Mammary epithelial cell (primary cell): ENCODE measurements at regions of chr5 and their contacts with region 1.

Region 1: DNA sequence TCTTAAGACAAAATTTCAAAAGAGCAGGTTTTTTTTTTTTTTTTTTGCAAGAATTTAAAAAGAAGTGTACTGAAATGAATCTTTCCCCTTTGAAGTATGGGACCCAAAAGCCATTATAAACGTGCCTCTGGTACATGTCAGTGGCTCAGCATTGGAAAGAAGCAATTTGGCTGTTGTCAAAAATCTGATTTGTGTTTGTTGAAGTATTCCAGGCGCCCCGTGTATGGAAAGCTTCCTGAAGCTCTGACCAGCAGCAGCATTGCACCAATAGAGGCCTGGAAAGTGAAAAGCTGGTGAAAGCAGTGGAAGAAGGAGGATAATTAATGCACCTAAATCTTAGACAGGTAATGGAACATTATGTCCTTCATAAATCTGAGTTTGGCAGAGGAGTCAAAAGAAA is 215.0 kb downstream of the PARP8 start:
- DNase-seq: no peak
- H3K4me3 ChIP-seq: no peak overlapping the region
- H3K27ac ChIP-seq: no peak overlapping the region
- H3K4me1 ChIP-seq: no peaks in the 10 kb centered on the region
- H3K27me3 ChIP-seq: peaks cover 5% of the 10 kb centered on the region
- CTCF ChIP-seq: no peak

Region 2: DNA sequence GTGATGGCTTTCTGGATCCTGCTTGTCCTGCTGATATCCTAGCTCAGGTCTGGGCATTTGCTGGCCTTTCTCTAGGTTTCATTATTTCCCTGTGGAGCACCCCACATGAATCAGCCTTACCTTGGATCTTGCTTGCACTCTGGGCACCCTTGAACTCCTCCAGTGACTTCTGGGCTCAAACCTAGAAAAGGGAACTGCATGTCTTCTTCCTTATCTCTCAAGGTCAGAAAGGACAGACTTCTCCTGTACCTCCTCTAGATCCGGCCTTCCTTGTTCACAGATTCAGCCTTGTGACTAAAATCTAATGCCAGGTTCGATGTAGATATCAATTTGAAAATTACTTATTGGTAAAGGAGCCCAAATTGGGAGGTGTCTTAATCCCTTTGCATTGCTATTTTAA is 52.9 kb after region 1 on chr5:
- CTCF ChIA-PET with region 1: no interaction called
- dilution Hi-C with region 1: loop called (anchors 5 kb)
- in situ Hi-C with region 1: no loop called
- intact Hi-C with region 1: no loop called
- DNase-seq: no peak
- H3K4me3 ChIP-seq: no peak overlapping the region
- H3K27ac ChIP-seq: no peak overlapping the region
- H3K4me1 ChIP-seq: no peaks in the 10 kb centered on the region
- H3K27me3 ChIP-seq: peaks cover 3% of the 10 kb centered on the region
- CTCF ChIP-seq: no peak